ENCODE measurements at regions of chr7 and their contacts with region 1.

Region 1: DNA sequence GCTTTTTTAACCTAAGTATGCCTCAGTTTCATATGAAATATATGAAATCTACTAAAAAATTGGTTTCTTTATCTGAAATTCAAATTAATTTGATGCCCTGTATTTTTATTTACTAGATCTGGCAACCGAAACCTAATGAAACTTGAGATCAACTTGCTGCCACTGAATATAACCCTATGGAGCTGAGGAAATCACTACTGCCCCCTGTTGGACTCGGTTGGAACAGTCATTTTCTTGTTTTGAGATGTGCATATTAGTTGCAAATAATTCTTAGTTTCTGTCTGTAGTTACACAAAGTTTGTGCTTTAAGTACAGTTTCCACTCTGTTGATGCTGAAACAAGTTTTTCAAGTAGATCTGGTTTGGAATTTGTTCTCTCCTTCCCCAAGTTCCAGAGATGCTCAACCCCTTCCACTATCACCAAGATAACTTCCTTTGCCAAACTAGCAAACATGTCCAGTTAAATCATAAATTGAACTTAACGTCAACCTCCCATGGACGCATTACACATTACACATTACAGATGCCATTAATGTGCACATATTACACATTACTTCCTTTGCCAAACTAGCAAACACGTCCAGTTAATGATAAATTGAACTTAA is 22.2 kb upstream of the EXOC4 start:
- DNase-seq: no peak
- H3K4me3 Mint-ChIP-seq: no peak overlapping the region
- H3K27ac Mint-ChIP-seq: no peak overlapping the region
- H3K4me1 Mint-ChIP-seq: no peaks in the 10 kb centered on the region
- H3K27me3 Mint-ChIP-seq: peaks cover 25% of the 10 kb centered on the region

Region 2: DNA sequence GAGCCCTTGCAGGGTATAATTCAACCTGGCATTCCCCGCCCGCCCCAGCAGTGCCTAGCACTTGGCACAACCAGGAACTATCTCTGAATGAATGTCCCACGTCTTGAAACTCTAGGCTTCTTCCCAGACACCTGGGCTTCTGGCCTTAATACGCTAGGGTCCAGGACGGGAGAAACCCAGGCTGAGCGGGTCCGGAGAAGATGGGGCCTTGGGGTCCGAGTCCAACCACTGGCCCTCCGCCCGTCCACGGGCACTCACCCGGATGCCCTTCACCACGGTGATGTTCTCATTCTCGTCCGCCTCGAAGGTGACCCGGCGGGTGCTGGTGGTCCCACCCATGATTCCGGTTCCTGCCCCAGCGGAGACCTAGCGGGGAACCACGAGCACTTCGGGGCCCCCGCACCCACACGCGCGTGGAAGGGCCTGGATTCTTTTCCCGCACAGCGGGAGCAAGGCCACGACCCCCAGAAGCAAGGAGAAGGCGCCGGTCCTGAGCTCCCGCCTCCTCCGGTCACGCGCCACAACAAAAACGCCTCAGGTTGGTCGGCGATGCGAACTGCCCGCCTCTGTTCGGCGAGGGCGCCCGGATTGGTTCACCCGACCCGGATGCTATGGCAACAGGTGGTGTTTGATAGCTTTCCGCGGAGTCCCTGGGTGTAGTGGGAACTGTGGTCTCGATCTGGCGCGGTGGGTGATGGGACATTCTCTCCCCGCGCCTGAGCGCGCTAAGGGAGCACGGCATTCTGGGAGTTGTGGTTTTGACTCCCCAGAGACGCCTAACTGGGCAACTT is 148.9 kb before region 1 on chr7 and contains the start of gene CHCHD3:
- intact Hi-C with region 1: no loop called
- DNase-seq: peak; percentile 96
- H3K4me3 Mint-ChIP-seq: peak within 1 kb of the TSS; percentile 93
- H3K27ac Mint-ChIP-seq: peak within 1 kb of the TSS; percentile 91
- H3K4me1 Mint-ChIP-seq: peaks cover 19% of the 10 kb centered on the region
- H3K27me3 Mint-ChIP-seq: peaks cover 8% of the 10 kb centered on the region
- total RNA-seq, gene CHCHD3: 67.0 and 69.3 TPM in 2 replicates

Region 3: DNA sequence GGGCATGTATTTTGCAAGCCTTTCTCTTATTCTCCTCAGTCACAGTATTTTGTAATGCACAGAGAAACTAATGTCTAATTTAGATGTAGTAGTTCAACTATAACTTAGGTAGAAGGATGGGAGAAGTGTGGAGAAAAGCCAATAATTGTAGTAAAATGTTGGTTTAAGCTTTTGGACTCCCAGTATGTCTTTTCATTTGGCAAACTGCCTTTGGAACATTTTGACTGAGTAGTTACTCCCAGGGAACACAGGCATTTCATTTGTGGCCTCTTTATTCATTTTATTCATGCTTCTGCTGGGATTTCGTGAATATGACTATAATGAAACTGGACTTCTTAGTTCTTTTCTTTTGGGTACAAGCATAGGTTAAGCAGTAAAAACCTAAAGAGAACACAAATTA is 101.2 kb after region 1 on chr7:
- intact Hi-C with region 1: no loop called
- DNase-seq: no peak
- H3K4me3 Mint-ChIP-seq: no peak overlapping the region
- H3K27ac Mint-ChIP-seq: no peak overlapping the region
- H3K4me1 Mint-ChIP-seq: no peaks in the 10 kb centered on the region
- H3K27me3 Mint-ChIP-seq: no peaks in the 10 kb centered on the region

Region 4: DNA sequence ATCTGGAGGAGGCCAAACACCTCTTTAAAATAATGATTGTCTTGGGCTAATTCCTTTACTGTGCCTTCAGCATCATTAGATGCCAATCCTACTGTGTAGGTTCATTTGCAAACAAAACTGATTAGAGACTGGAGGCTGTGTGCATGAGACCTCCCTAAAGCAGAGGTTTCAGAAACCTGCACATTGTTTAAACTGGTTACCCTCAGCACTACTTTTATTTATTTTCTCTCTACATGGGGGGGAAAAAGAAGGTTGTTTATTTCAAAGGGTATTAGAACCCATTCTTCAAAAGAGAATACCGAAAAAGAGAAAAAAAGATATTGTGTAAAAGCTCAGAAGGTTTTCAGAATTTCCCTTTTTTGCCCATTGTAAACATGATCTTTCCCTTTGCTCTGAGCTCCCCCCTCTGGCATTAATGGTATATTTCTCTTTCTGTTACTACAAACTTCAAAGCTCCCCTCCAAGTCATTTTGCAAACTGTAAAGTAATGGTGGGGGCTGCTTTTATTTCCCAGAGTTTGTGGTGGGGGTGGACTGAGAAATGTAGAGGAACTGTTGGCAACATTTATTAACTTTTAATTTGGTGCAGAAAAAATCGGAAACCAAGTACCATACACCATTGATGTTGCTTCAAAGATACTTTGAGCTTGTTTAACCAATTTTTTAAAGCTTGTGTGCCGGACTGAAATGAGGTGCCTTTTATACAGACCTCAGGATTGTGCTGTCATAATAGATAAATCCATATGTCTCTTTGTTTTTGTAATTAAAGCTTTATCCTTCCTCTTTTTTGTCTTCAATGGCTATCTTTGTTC is 203.6 kb after region 1 on chr7:
- intact Hi-C with region 1: loop called (anchors 5 kb)
- DNase-seq: no peak
- H3K4me3 Mint-ChIP-seq: no peak overlapping the region
- H3K27ac Mint-ChIP-seq: no peak overlapping the region
- H3K4me1 Mint-ChIP-seq: peaks cover 17% of the 10 kb centered on the region
- H3K27me3 Mint-ChIP-seq: no peaks in the 10 kb centered on the region

Measured in activated T-helper 2 cell treated with anti-CD3 and anti-CD28 coated beads, Interferon-gamma antibody, Interleukin-2, Interleukin-4, amounts not matched to agents 10 μg/mL and 5 μg/mL and 100 μg/mL, durations not matched to agents 14 hours and 24 hours and 36 hours (primary cell).